ENCODE measurements at regions of chr14 and their contacts with region 1.

Region 1: GRCh38 chr14:96391293-96392118 is 422 bp upstream of the AK7 start:
- DNase-seq: peak; percentile 94 to 97 (median 97)
- H3K4me3 ChIP-seq: peak overlapping the region; percentile 60 to 93 (median 71)
- H3K4me3 Mint-ChIP-seq: peak overlapping the region; percentile 86 to 95
- H3K27ac ChIP-seq: peak overlapping the region in 1 of 2 donors; percentile 41
- H3K27ac Mint-ChIP-seq: peak overlapping the region in 4 of 7 donors; percentile 19 to 85 (median 57)
- H3K4me1 ChIP-seq: peaks cover 14 to 19% of the 10 kb centered on the region in 2 donors
- H3K4me1 Mint-ChIP-seq: peaks cover 11% of the 10 kb centered on the region
- H3K27me3 ChIP-seq: peaks cover 15 to 32% of the 10 kb centered on the region in 2 donors
- H3K27me3 Mint-ChIP-seq: peaks cover 24 to 47% (median 33%) of the 10 kb centered on the region in 3 donors
- CTCF ChIP-seq: no peak

Region 2: GRCh38 chr14:96338551-96338950 is 53.0 kb before region 1 on chr14:
- intact Hi-C with region 1: no loop called
- DNase-seq: no peak
- H3K4me3 ChIP-seq: no peak overlapping the region
- H3K4me3 Mint-ChIP-seq: no peak overlapping the region
- H3K27ac ChIP-seq: no peak overlapping the region
- H3K27ac Mint-ChIP-seq: no peak overlapping the region
- H3K4me1 ChIP-seq: no peaks in the 10 kb centered on the region
- H3K4me1 Mint-ChIP-seq: no peaks in the 10 kb centered on the region
- H3K27me3 ChIP-seq: no peaks in the 10 kb centered on the region
- H3K27me3 Mint-ChIP-seq: no peaks in the 10 kb centered on the region
- CTCF ChIP-seq: no peak

Region 3: DNA sequence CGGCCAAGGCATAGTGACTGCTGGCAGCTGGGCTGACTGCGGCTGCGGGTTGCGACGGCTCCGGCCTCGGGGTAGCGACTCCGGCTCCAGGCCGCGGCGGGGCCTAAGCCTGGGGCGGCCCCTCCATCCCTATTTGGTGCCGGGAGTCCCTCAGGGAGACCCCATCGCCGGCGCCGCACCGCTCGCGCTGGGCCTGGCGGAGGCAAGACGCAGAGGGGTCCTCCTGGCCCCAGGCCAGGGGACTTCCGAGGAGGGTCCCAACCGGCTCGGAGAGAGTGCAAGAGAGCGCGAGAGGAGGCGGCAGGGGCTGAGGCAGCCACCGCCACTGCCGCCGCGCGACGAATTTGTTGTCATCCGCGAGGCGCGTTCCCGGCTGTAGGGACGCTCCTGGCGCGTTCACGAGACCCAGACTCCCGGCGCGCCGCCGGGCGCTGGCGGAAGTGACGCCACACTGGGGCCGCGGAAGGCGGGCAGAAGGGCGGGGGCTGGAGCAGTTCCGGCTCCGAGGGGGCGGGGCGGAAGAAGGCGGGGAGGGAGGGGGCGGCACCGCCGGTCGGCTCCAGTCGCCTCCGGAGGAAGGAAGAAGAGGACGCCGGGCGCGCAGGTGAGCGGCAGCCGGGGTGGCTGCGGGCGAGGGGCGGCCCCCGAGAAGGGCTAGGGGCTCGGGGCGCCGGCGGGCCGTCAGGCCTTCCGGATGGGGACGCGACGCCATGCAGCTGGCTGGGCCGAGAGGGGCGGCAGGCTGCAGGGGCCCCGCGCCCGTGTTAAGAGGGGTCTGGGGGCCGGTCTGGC is 28.3 kb before region 1 on chr14 and contains the starts of genes ATG2B and GSKIP:
- intact Hi-C with region 1: loop called in 1 of 2 experiments (anchors 2 kb)
- DNase-seq: peak; percentile 89 to 96 (median 95)
- H3K4me3 ChIP-seq: peak within 1 kb of the TSS; percentile 81 to 95 (median 91)
- H3K4me3 Mint-ChIP-seq: peak within 1 kb of the TSS; percentile 88 to 91
- H3K27ac ChIP-seq: peak within 1 kb of the TSS; percentile 64 to 90
- H3K27ac Mint-ChIP-seq: peak within 1 kb of the TSS; percentile 70 to 87 (median 82)
- H3K4me1 ChIP-seq: peaks cover 31 to 33% of the 10 kb centered on the region in 2 donors
- H3K4me1 Mint-ChIP-seq: peaks cover 45% of the 10 kb centered on the region
- H3K27me3 ChIP-seq: no peaks in the 10 kb centered on the region
- H3K27me3 Mint-ChIP-seq: no peaks in the 10 kb centered on the region
- CTCF ChIP-seq: no peak
- polyA plus RNA-seq, gene ATG2B: 0.94 to 6.7 (median 1.3) TPM
- polyA plus RNA-seq, gene GSKIP: 3.1 to 24.7 (median 20.7) TPM

Region 4: GRCh38 chr14:97218691-97219430 is 827.4 kb after region 1 on chr14:
- intact Hi-C with region 1: no loop called
- DNase-seq: no peak
- H3K4me3 ChIP-seq: no peak overlapping the region
- H3K4me3 Mint-ChIP-seq: peak overlapping the region; percentile 32 to 69
- H3K27ac ChIP-seq: no peak overlapping the region
- H3K27ac Mint-ChIP-seq: no peak overlapping the region
- H3K4me1 ChIP-seq: peaks cover 0 to 5% of the 10 kb centered on the region in 2 donors
- H3K4me1 Mint-ChIP-seq: no peaks in the 10 kb centered on the region
- H3K27me3 ChIP-seq: peaks cover 22 to 43% of the 10 kb centered on the region in 2 donors
- H3K27me3 Mint-ChIP-seq: peaks cover 38 to 52% (median 44%) of the 10 kb centered on the region in 3 donors
- CTCF ChIP-seq: no peak